Activated naive CD4-positive, alpha-beta T cell treated with anti-CD3 and anti-CD28 coated beads for 36 hours (primary cell): ENCODE measurements at regions of chrX and their contacts with region 1.

Region 1: GRCh38 chrX:53317365-53318069 is 36.1 kb upstream of the IQSEC2 start:
- DNase-seq: peak; percentile 68
- H3K4me3 Mint-ChIP-seq: no peak overlapping the region
- H3K27ac Mint-ChIP-seq: no peak overlapping the region
- H3K4me1 Mint-ChIP-seq: peaks cover 13% of the 10 kb centered on the region
- H3K27me3 Mint-ChIP-seq: peaks cover 34% of the 10 kb centered on the region

Region 2: DNA sequence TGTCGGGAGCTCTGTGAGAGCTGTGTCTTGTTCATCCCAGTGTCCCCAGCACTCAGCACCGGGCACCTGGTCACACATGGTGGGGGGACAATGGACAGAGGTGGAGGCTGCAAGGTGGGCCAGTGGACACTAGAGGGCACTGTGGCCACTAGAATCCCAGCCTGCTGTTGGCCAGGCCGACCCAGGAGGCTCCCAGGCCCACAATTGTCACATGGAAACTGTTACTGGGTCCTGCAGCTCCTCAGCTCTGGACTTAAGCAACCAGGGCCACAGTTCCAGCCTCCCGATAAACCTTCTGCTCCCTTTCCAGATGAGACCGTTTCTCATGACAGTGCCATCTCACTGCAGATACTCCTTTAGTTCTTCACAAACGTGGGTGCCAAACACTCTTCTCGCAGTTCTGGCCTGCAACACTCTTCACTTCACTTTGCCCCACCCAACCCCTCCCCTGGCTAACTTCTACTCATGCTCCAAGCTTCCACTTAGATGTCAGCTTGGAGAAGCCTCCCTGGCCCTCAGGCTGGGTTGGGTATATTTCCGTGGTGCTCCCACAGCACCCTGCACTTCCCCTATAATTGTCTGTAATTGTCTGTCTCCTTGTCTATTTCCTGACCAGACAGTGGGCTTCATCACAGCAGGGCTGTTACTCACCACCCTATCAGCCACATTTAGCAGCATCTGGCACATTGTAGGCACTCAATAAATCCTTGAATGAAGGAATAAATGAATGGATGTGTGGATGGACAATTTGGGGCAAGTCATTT is 32.7 kb before region 1 on chrX:
- CTCF ChIA-PET with region 1: interaction called, 26 read pairs
- intact Hi-C with region 1: no loop called
- DNase-seq: peak; percentile 51
- H3K4me3 Mint-ChIP-seq: no peak overlapping the region
- H3K27ac Mint-ChIP-seq: no peak overlapping the region
- H3K4me1 Mint-ChIP-seq: peaks cover 21% of the 10 kb centered on the region
- H3K27me3 Mint-ChIP-seq: no peaks in the 10 kb centered on the region

Region 3: DNA sequence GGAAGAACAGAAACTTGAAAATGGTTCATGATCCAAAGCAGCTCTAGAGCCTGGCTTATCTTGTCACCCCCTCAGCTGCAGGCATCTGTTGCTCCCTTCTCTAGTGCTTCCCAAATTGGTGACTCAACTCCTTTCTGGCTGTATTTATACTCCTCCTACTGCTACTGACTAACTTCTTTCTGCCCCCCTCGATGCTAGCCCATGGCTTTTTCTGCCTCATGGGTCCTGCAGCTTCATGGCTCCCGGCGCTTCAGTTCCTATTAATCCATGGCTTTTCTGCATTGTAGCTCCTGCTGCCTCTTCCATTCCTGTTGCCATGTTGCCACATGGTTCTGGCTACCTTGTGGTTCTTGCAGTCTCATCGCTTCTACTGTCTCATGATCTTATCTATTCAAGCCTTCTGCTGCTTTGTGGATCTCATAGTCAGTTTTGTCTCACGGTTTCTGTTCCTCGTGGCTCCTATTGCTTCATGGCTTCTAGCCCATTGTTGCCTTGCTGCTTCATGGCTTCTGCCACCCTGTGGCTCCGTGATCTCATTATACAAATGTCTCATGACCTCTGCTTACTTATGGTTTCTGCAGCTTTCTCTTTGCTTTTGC is 56.8 kb after region 1 on chrX:
- CTCF ChIA-PET with region 1: interaction called, 8 read pairs
- intact Hi-C with region 1: loop called (anchors 10 kb)
- DNase-seq: no peak
- H3K4me3 Mint-ChIP-seq: no peak overlapping the region
- H3K27ac Mint-ChIP-seq: peak overlapping the region; percentile 13
- H3K4me1 Mint-ChIP-seq: no peaks in the 10 kb centered on the region
- H3K27me3 Mint-ChIP-seq: no peaks in the 10 kb centered on the region

Region 4: GRCh38 chrX:53433651-53434639 is 116.4 kb after region 1 on chrX and contains the start of gene HSD17B10:
- CTCF ChIA-PET with region 1: interaction called, 21 read pairs
- intact Hi-C with region 1: loop called (anchors 1 kb)
- DNase-seq: peak; percentile 88
- H3K4me3 Mint-ChIP-seq: peak within 1 kb of the TSS; percentile 85
- H3K27ac Mint-ChIP-seq: peak within 1 kb of the TSS; percentile 76
- H3K4me1 Mint-ChIP-seq: peaks cover 28% of the 10 kb centered on the region
- H3K27me3 Mint-ChIP-seq: no peaks in the 10 kb centered on the region
- total RNA-seq, gene HSD17B10: 69.2 to 75.2 TPM

Region 5: GRCh38 chrX:53441531-53442321 is 124.2 kb after region 1 on chrX:
- CTCF ChIA-PET with region 1: interaction called, 38 read pairs
- intact Hi-C with region 1: loop called (anchors 1 kb)
- DNase-seq: peak; percentile 72
- H3K4me3 Mint-ChIP-seq: peak overlapping the region; percentile 78
- H3K27ac Mint-ChIP-seq: no peak overlapping the region
- H3K4me1 Mint-ChIP-seq: peaks cover 26% of the 10 kb centered on the region
- H3K27me3 Mint-ChIP-seq: no peaks in the 10 kb centered on the region

Region 6: DNA sequence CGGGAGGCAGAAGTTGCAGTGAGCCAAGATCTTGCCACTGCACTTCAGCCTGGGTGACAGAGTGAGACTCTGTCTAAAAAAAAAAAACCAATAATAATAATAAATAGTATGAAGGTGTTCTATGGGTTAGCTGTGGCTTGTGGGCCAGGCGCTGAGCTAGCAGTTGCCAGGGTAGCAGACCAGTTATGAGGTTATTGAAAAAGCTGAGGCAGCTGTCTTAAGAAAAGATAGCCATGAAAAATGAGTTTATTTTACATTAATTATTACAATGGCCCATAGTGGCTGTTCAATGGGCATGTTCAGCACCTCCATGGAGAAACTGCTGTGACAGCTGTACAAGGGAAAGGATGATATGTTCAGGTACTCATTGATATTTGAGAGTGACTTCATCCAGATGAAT is 129.9 kb after region 1 on chrX:
- CTCF ChIA-PET with region 1: interaction called, 38 read pairs
- intact Hi-C with region 1: loop called (anchors 1 kb)
- DNase-seq: no peak
- H3K4me3 Mint-ChIP-seq: no peak overlapping the region
- H3K27ac Mint-ChIP-seq: no peak overlapping the region
- H3K4me1 Mint-ChIP-seq: no peaks in the 10 kb centered on the region
- H3K27me3 Mint-ChIP-seq: no peaks in the 10 kb centered on the region

Region 7: DNA sequence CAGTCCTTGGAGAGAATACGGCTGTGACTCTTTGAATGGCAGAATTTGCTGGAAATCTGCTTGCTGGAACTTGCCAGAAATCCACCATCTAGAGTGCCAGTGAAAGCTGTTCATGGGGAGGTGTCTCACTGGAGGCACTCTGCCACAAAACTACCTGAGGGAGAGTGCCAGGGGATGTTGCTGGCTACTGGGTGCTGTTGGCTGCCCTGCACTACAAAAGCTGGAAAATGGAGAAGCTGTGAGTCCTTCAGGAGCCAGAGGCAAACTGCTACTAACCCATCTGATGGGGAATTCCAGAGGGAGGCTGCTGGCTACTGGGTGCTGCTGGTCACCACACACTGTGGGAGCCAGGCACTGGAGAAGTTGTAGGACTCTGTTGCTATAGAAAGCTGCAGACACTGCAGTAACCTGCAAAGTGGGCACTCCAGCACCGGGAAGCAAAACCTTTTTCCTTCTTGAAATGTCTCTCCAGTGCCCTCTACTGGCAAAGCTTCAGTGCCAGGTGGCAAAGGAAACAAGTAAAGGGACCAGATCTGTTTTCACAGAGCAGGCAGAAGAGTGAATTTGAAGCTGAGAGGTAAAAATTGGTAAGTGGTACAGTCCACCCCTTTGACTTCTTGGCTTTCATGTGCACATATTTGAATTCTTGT is 164.4 kb after region 1 on chrX:
- CTCF ChIA-PET with region 1: interaction called, 34 read pairs
- intact Hi-C with region 1: loop called (anchors 1 kb)
- DNase-seq: peak; percentile 63
- H3K4me3 Mint-ChIP-seq: no peak overlapping the region
- H3K27ac Mint-ChIP-seq: no peak overlapping the region
- H3K4me1 Mint-ChIP-seq: no peaks in the 10 kb centered on the region
- H3K27me3 Mint-ChIP-seq: no peaks in the 10 kb centered on the region